OCI-LY7 (cell line): ENCODE measurements at regions of chr14 and their contacts with region 1.

Region 1: GRCh38 chr14:95319312-95320021 is at the start of gene CLMN:
- DNase-seq: peak; percentile 66
- H3K4me3 ChIP-seq: peak within 1 kb of the TSS; percentile 82
- H3K27ac ChIP-seq: no peak within 1 kb of the TSS
- H3K4me1 ChIP-seq: peaks cover 36% of the 10 kb centered on the region
- CTCF ChIP-seq: no peak
- total RNA-seq, gene CLMN: 5.8 and 6.8 TPM in 2 replicates

Region 2: DNA sequence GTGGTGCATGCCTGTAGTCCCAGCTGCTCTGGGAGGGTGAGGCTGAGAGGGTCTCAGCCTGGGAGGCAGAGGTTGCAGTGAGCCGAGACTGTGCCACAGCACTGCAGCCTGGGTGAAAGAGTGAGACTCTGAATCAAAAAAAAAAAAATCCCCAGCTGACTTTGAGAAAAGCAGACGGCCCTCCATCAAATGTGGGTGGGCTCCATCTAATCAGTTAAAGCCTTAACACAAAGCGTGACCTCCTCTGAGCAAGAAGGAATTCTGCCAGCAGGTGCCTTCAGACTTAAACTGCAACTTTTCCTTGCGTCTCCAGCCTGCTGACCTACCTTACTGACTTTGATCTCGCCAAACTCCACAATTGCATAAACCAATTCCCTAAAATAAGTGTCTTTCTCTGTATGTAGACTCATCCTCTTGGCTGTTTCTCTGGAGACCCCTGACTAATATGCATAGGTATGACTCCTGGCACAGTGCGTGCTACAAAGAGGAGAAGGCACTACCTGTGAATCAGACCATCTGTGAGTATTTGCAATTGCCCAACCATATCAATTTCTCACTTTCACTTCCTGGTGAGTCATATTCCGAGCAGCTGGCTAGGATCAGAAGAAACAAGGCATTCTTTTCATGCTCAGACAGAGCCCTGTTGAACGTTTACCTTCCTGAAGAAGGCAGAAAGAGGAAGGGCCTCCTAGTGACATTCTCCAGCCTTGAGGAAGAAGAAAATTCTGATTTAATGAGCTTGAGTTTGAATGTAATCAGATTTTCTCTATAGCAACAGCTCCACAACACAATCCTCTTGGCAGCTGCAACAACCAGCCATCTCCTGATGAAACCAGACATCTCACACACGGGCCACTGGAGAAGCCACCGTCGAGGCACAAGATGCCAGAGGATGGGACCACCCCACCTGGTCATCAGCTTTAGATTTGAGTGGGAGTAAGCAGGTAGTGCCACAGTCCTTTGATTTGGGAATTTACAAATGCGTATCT is 54.1 kb before region 1 on chr14:
- CTCF ChIA-PET with region 1: no interaction called
- POLR2A ChIA-PET with region 1: no interaction called
- intact Hi-C with region 1: loop called (anchors 2 kb)
- DNase-seq: peak; percentile 90
- H3K4me3 ChIP-seq: peak overlapping the region; percentile 52
- H3K27ac ChIP-seq: peak overlapping the region; percentile 84
- H3K4me1 ChIP-seq: peaks cover 62% of the 10 kb centered on the region
- CTCF ChIP-seq: no peak

Region 3: GRCh38 chr14:95534299-95535225 is 215.1 kb after region 1 on chr14 and contains the start of gene GLRX5:
- CTCF ChIA-PET with region 1: no interaction called
- POLR2A ChIA-PET with region 1: no interaction called
- intact Hi-C with region 1: no loop called
- DNase-seq: peak; percentile 100
- H3K4me3 ChIP-seq: peak within 1 kb of the TSS; percentile 93
- H3K27ac ChIP-seq: peak within 1 kb of the TSS; percentile 80
- H3K4me1 ChIP-seq: peaks cover 54% of the 10 kb centered on the region
- CTCF ChIP-seq: no peak
- total RNA-seq, gene GLRX5: 59.6 and 68.2 TPM in 2 replicates

Region 4: DNA sequence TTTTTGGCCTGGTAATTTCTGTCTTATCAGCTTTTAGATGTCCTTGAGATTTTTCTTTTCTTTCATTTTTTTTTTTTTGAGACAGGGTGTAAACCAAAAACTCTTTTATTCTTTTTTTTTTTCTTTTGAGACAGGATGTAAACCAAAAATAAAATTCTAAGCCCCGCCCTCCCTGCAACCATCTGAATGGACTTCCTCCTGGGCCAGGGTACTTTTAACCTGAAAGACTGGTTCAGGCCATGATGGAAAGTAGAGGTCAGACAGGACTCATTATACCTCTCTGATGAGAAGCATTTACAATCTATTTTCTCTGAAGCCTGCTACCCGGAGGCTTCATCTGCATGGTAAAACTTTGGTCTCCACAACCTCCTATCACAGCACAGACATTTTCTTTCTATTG is 333.2 kb after region 1 on chr14:
- CTCF ChIA-PET with region 1: no interaction called
- POLR2A ChIA-PET with region 1: no interaction called
- intact Hi-C with region 1: no loop called
- DNase-seq: peak; percentile 90
- H3K4me3 ChIP-seq: peak overlapping the region; percentile 39
- H3K27ac ChIP-seq: peak overlapping the region; percentile 91
- H3K4me1 ChIP-seq: peaks cover 66% of the 10 kb centered on the region
- CTCF ChIP-seq: no peak